Heart right ventricle (tissue), 16 donors: ENCODE measurements at regions of chr2 and their contacts with region 1.

Region 1: DNA sequence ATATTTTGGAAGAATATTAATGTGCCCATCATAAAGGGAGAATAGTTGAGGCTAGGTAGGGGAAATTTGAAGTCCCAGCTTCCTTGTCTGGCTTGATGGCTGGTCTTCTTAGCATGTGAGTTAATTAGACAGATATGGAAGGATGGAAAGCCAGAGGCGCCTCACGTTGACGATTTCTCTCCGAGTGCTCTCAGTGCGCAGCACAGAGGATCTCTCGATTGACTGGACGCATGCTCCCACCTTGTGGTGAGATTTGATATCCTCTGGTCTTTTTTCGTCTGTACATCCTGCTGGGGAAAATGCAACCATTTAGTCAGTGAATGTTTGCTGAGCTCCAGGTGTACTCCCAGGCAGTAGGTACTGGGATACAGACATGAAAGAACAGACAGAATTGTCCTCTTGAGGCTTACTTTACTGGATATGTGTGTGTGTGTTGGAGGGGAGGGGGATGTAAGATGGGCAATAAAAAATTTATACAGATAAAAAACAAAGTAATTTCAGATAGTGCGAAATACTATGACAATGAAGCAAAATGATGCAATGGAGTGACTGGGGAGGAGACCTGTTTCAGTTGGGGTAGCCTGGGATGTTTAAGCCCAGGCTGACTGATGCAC is 66.9 kb upstream of the ZNG1B start:
- DNase-seq: peak; percentile 42 to 63
- ATAC-seq: peak; percentile 77 to 95 (median 88)
- H3K4me3 ChIP-seq: no peak overlapping the region
- H3K27ac ChIP-seq: no peak overlapping the region
- H3K4me1 ChIP-seq: peaks cover 0 to 6% (median 0%) of the 10 kb centered on the region in 9 donors
- H3K27me3 ChIP-seq: peaks cover 0 to 11% (median 0%) of the 10 kb centered on the region in 7 donors
- CTCF ChIP-seq: peak; percentile 46 to 82 (median 71)

Region 2: GRCh38 chr2:113203901-113204519 is 166.6 kb before region 1 on chr2:
- intact Hi-C with region 1: loop called (anchors 2 to 5 kb)
- DNase-seq: peak; percentile 60 to 68
- ATAC-seq: peak; percentile 60 to 85 (median 72)
- H3K4me3 ChIP-seq: no peak overlapping the region
- H3K27ac ChIP-seq: no peak overlapping the region
- H3K4me1 ChIP-seq: peaks cover 0 to 14% (median 5%) of the 10 kb centered on the region in 9 donors
- H3K27me3 ChIP-seq: no peaks in the 10 kb centered on the region
- CTCF ChIP-seq: peak; percentile 76 to 91 (median 87)

Region 3: DNA sequence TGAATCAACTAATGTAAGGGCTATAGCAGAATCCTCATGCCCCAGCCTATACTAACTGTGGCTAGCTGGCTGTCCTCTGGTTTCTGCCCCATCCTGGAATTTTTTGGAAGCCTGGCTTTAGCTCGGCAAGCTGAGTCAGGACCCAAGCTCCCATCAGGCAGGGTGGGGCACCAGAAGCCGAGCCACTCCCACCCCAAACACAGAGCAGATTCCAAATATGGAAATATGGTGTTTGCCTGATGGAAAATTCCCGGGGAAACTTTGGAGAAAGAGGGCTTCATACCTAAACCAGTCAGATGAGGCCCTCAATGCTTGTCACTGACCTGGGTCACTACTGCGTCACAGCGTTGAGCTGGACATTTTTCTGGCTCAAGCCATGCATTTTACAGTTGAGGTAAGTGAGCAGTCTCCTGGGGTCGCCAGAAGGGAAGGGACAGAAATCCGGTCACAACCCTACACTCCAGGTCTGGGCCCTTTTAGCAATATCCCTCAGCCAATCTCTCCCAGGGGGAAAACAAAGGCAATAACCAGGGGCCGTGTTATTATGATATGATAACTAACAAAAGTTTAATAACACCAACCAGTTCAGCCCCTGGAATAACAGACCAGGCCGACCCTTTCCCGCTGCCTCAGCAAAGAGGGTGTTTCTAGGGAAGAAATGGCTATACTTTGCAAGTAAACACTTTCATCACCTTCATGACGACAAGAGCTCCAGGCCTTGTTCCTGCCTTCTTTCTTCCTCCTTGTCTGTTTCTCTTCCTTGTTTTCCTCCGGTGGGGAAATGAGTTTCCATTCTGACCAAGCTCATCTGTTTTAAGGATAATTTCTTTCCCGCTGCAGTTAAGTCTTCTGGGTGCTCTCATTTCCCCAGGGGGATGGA is 159.1 kb before region 1 on chr2:
- intact Hi-C with region 1: loop called in 1 of 10 experiments (anchors 5 kb)
- DNase-seq: no peak
- ATAC-seq: peak in 7 of 8 donors; percentile 39 to 74 (median 50)
- H3K4me3 ChIP-seq: peak overlapping the region in 4 of 10 donors; percentile 12 to 24 (median 16)
- H3K27ac ChIP-seq: peak overlapping the region in 9 of 10 donors; percentile 44 to 87 (median 68)
- H3K4me1 ChIP-seq: peaks cover 7 to 28% (median 24%) of the 10 kb centered on the region in 9 donors
- H3K27me3 ChIP-seq: no peaks in the 10 kb centered on the region
- CTCF ChIP-seq: no peak